ENCODE measurements at regions of chr21 and their contacts with region 1.

Region 1: GRCh38 chr21:17611414-17612022 is 1.2 kb downstream of the BTG3 start:
- DNase-seq: peak; percentile 85
- H3K4me3 Mint-ChIP-seq: peak overlapping the region; percentile 87
- H3K27ac Mint-ChIP-seq: peak overlapping the region; percentile 98
- H3K4me1 Mint-ChIP-seq: peaks cover 59% of the 10 kb centered on the region
- H3K27me3 Mint-ChIP-seq: no peaks in the 10 kb centered on the region

Region 2: GRCh38 chr21:17598437-17598836 is 13.1 kb before region 1 on chr21:
- CTCF ChIA-PET with region 1: interaction called, 12 read pairs
- POLR2A ChIA-PET with region 1: interaction called, 3 read pairs
- DNase-seq: no peak
- H3K4me3 Mint-ChIP-seq: no peak overlapping the region
- H3K27ac Mint-ChIP-seq: no peak overlapping the region
- H3K4me1 Mint-ChIP-seq: peaks cover 15% of the 10 kb centered on the region
- H3K27me3 Mint-ChIP-seq: no peaks in the 10 kb centered on the region

Measured in activated CD4-positive, alpha-beta T cell treated with anti-CD3 and anti-CD28 coated beads, Interleukin-2, amount 10 ng/mL, durations not matched to agents 7 days and 5 days (primary cell).